ENCODE measurements at regions of chr9 and their contacts with region 1.

Region 1: GRCh38 chr9:137240861-137241489 is at the start of gene TUBB4B:
- DNase-seq: peak; percentile 97
- ATAC-seq: peak; percentile 62
- H3K4me3 ChIP-seq: peak within 1 kb of the TSS; percentile 97
- H3K27ac ChIP-seq: peak within 1 kb of the TSS; percentile 89
- H3K4me1 ChIP-seq: peaks cover 37% of the 10 kb centered on the region
- H3K27me3 ChIP-seq: no peaks in the 10 kb centered on the region
- CTCF ChIP-seq: no peak
- total RNA-seq, gene TUBB4B: 424 and 599 TPM in 2 replicates

Region 2: GRCh38 chr9:136937186-136938011 is 303.6 kb before region 1 on chr9:
- CTCF ChIA-PET with region 1: no interaction called
- POLR2A ChIA-PET with region 1: no interaction called
- intact Hi-C with region 1: no loop called
- DNase-seq: no peak
- ATAC-seq: no peak
- H3K4me3 ChIP-seq: no peak overlapping the region
- H3K27ac ChIP-seq: no peak overlapping the region
- H3K4me1 ChIP-seq: no peaks in the 10 kb centered on the region
- H3K27me3 ChIP-seq: no peaks in the 10 kb centered on the region
- CTCF ChIP-seq: no peak

Region 3: DNA sequence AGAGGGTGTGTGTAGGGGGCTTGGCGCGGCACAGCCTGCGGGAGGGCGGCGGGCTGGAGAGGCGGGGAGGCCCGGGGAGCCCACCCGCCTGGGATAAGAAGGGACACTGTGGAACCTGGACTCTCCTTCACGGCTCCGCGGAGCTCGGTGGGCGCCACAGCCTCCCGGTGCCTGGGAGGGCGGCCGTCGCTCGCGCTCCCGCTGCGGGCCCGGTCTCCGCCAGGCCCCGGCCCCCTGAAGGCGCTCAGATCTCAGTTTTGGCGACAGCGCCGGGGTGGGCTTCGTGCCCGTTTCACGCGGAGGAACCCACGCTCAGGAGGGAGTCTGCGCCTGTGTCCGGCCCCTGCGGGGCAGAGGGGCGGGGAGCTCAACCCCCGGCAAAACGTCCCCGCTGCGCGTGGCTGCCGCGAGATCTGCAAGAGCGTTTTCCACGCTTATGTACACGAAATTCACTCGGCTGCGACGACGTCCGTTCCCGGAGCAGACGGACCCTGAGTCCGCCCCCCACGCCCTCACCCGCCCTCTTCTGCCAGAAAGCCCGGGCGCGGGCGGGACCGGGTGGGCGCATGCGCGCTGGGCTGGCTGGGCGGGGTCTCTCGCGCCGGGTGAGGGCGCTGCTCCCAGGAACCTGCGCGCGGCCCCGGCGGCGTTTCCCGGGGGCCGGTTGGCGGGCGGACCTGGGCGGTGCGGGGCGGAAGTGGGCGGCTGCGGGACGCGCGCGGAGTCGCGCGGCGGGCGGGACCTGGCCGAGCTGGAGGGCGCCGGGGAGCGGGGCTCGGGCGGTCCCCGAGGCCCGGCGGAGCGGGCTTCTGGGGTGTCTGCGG is 13.9 kb after region 1 on chr9 and contains the start of gene NELFB:
- CTCF ChIA-PET with region 1: interaction called, 7 read pairs
- POLR2A ChIA-PET with region 1: interaction called, 10 read pairs
- intact Hi-C with region 1: no loop called
- DNase-seq: peak; percentile 84
- ATAC-seq: peak; percentile 75
- H3K4me3 ChIP-seq: peak within 1 kb of the TSS; percentile 93
- H3K27ac ChIP-seq: no peak within 1 kb of the TSS
- H3K4me1 ChIP-seq: peaks cover 15% of the 10 kb centered on the region; the same call in 1 of the 2 replicates
- H3K27me3 ChIP-seq: no peaks in the 10 kb centered on the region
- CTCF ChIP-seq: no peak
- total RNA-seq, gene NELFB: 50.7 and 69.5 TPM in 2 replicates

Region 4: DNA sequence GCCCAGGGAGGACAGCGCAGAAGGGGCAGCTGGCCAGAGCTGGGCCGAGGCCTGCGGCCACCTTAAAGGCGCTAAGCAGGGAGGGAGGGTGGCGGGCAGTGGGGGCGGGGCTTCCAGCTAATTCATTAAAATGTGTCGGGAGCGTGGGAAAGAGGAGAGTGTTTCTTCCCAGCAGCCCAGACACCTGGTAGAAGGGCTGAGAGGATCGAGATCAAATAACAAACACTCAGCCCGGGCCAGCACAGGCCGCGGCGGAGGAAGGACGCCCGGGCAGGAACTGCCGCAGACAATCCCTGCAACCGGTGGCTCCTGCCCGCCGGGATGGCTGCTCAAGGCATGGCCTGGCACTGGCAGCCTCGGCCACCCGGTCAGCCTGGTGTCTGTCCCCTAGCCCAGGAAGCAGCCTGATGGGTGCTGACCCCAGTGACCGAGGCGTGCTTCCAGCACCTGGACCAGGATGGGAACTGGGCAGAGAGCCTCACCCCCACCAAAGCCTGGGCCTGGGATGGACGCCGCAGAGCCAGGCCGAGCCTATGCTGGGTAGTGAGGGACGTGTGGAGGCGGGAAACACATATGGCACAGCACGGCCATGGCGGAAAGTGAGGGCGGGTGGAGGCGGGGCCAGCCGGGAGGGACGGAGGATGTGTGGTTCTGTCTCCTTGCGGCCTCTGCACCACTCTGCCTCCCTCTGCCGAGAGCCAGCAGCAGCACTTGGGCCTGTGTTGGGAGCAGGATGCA is 64.3 kb after region 1 on chr9:
- CTCF ChIA-PET with region 1: no interaction called
- POLR2A ChIA-PET with region 1: no interaction called
- intact Hi-C with region 1: no loop called
- DNase-seq: no peak
- ATAC-seq: no peak
- H3K4me3 ChIP-seq: no peak overlapping the region
- H3K27ac ChIP-seq: no peak overlapping the region
- H3K4me1 ChIP-seq: peaks cover 8% of the 10 kb centered on the region
- H3K27me3 ChIP-seq: no peaks in the 10 kb centered on the region
- CTCF ChIP-seq: no peak

Measured in PC-3 (cell line).